Activated CD8-positive, alpha-beta memory T cell treated with anti-CD3 and anti-CD28 coated beads, Interleukin-2, amount 10 ng/mL, durations not matched to agents 7 days and 5 days (primary cell): ENCODE measurements at regions of chr16 and their contacts with region 1.

Region 1: GRCh38 chr16:12067714-12068401 is 91.3 kb downstream of the SNX29 start:
- DNase-seq: peak; percentile 71
- ATAC-seq: peak; percentile 74
- H3K4me3 Mint-ChIP-seq: no peak overlapping the region
- H3K27ac Mint-ChIP-seq: no peak overlapping the region
- H3K4me1 Mint-ChIP-seq: no peaks in the 10 kb centered on the region
- H3K27me3 Mint-ChIP-seq: no peaks in the 10 kb centered on the region

Region 2: GRCh38 chr16:11949527-11949926 is 118.3 kb before region 1 on chr16:
- CTCF ChIA-PET with region 1: interaction called, 15 read pairs
- DNase-seq: no peak
- ATAC-seq: peak; percentile 57
- H3K4me3 Mint-ChIP-seq: no peak overlapping the region
- H3K27ac Mint-ChIP-seq: no peak overlapping the region
- H3K4me1 Mint-ChIP-seq: no peaks in the 10 kb centered on the region
- H3K27me3 Mint-ChIP-seq: no peaks in the 10 kb centered on the region

Region 3: DNA sequence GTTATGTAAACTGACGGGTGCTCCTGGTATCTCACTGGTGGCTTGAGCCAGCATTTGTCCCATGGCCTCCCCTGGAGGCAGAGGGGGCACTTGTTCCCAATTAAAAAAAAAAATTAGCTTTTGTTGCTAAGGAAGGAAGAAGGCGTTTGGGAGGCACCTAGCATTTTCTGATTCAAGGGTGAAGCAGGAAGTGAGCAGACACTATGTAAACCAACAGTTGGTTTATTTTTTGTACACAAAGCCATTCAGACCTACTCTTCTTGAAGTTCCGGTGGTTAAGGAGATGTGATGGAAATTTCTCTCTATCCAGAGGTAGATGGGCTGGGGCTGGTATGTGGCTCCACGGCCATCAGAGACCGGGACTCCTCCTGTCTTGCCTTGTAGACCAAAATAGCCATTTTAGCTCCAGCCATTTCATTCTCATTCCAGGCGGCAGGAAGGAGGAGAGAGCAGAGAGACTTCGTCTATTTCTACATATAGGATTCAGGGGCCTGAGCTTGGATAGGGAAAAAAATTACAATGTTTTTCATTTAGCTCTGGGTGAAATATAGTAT is 11.6 kb after region 1 on chr16:
- CTCF ChIA-PET with region 1: interaction called, 27 read pairs
- DNase-seq: no peak
- ATAC-seq: peak; percentile 38
- H3K4me3 Mint-ChIP-seq: peak overlapping the region; percentile 38
- H3K27ac Mint-ChIP-seq: peak overlapping the region; percentile 91
- H3K4me1 Mint-ChIP-seq: peaks cover 57% of the 10 kb centered on the region
- H3K27me3 Mint-ChIP-seq: no peaks in the 10 kb centered on the region